Body of pancreas (tissue), 4 donors: ENCODE measurements at regions of chr17 and their contacts with region 1.

Region 1: DNA sequence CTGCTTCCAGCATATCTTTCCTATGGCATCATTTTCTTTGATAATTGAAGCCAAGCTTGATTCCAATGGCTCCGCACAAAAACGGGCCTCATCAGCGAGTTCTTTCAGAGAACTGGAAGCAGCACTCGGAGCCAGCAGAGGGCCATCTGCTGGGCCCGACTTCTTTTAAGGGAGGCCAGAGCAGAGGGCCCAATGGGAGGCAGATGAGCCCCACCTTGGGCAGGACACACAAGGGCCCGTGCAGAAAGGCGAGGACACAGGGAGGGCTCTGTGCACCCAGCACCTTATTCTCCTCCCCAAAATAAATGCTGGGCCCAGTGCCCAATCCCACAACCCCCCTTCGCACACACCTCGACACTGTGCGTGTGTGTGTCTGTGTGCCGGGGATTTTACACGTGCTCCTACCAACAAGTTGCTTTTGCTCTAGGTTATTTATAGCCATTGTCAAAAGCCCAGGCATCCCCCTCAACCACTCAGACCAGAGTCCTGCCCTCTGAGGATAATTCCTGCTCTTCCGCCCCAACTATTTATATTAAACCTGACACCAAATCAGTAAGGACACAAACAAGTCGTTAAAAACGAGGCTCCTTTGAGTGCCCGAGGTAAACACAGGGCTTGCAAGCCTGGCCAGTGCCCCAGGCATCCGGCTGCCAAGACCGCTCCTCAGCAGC is 6.8 kb downstream of the AXIN2 start:
- DNase-seq: peak in 1 of 4 donors; percentile 18
- ATAC-seq: no peak
- H3K4me3 ChIP-seq: no peak overlapping the region
- H3K27ac ChIP-seq: peak overlapping the region in 1 of 4 donors; percentile 13
- H3K4me1 ChIP-seq: peaks cover 47% of the 10 kb centered on the region
- H3K27me3 ChIP-seq: no peaks in the 10 kb centered on the region
- CTCF ChIP-seq: no peak
- POLR2A ChIP-seq: no peak

Region 2: GRCh38 chr17:65297378-65297777 is 257.3 kb before region 1 on chr17:
- intact Hi-C with region 1: loop called (anchors 5 kb)
- DNase-seq: no peak
- ATAC-seq: no peak
- H3K4me3 ChIP-seq: no peak overlapping the region
- H3K27ac ChIP-seq: no peak overlapping the region
- H3K4me1 ChIP-seq: peaks cover 6% of the 10 kb centered on the region
- H3K27me3 ChIP-seq: no peaks in the 10 kb centered on the region
- CTCF ChIP-seq: no peak
- POLR2A ChIP-seq: no peak

Region 3: DNA sequence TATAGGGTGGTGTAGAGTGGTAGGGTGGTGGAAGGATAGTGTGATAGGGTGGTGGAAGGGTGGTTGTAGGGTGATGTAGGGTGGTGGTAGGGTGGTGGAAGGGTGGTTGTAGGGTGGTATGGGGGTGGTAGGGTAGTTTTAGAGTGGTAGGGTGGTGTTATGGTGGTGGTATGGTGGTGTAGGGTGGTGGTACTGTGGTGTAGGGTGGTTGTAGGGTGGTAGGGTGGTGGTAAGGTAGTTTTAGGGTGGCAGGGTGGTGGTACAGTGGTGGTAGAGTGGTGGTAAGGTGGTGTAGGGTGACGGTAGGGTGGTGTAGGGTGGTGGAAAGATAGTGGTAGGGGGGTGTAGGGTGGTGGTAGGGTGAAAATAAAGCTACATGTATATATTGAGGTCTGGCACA is 54.7 kb before region 1 on chr17:
- intact Hi-C with region 1: no loop called
- DNase-seq: no peak
- ATAC-seq: no peak
- H3K4me3 ChIP-seq: no peak overlapping the region
- H3K27ac ChIP-seq: no peak overlapping the region
- H3K4me1 ChIP-seq: no peaks in the 10 kb centered on the region
- H3K27me3 ChIP-seq: no peaks in the 10 kb centered on the region
- CTCF ChIP-seq: no peak
- POLR2A ChIP-seq: no peak